GM12878 (cell line): ENCODE measurements at regions of chr22 and their contacts with region 1.

Region 1: GRCh38 chr22:33920927-33921524 is 750 bp upstream of the LARGE1 start:
- DNase-seq: peak; percentile 43
- ATAC-seq: peak; percentile 82
- H3K4me3 ChIP-seq: peak overlapping the region; percentile 93
- H3K27ac ChIP-seq: no peak overlapping the region
- H3K4me1 ChIP-seq: peaks cover 3% of the 10 kb centered on the region; the same call in 1 of the 2 replicates
- H3K27me3 ChIP-seq: peaks cover 0 to 1% of the 10 kb centered on the region in 2 experiments; a peak in 2 of 4 replicates
- CTCF ChIP-seq: no peak
- EP300 ChIP-seq: no peak
- POLR2A ChIP-seq: peak; percentile 92
- RAD21 ChIP-seq: no peak

Region 2: GRCh38 chr22:33519071-33519973 is 401.7 kb before region 1 on chr22:
- CTCF ChIA-PET with region 1: interaction called, 49 read pairs
- POLR2A ChIA-PET with region 1: no interaction called
- RAD21 ChIA-PET with region 1: interaction called, 22 read pairs
- SMC1A ChIA-PET with region 1: interaction called, 24 read pairs
- in situ Hi-C with region 1: loop called (anchors 5 kb)
- intact Hi-C with region 1: loop called (anchors 1 kb)
- DNase-seq: peak; percentile 37
- ATAC-seq: peak; percentile 78
- H3K4me3 ChIP-seq: no peak overlapping the region
- H3K27ac ChIP-seq: peak overlapping the region; percentile 45; the same call in 1 of the 2 replicates
- H3K4me1 ChIP-seq: peaks cover 27% of the 10 kb centered on the region
- H3K27me3 ChIP-seq: no peaks in the 10 kb centered on the region
- CTCF ChIP-seq: peak; percentile 50 to 61 (median 50)
- EP300 ChIP-seq: no peak
- POLR2A ChIP-seq: no peak
- RAD21 ChIP-seq: peak; percentile 86

Region 3: GRCh38 chr22:33579448-33580093 is 341.5 kb before region 1 on chr22:
- CTCF ChIA-PET with region 1: interaction called, 11 read pairs
- POLR2A ChIA-PET with region 1: no interaction called
- RAD21 ChIA-PET with region 1: interaction called, 3 read pairs
- SMC1A ChIA-PET with region 1: interaction called, 4 read pairs
- in situ Hi-C with region 1: loop called (anchors 10 kb)
- intact Hi-C with region 1: loop called (anchors 5 kb)
- DNase-seq: no peak
- ATAC-seq: peak; percentile 97
- H3K4me3 ChIP-seq: no peak overlapping the region
- H3K27ac ChIP-seq: no peak overlapping the region
- H3K4me1 ChIP-seq: peaks cover 3% of the 10 kb centered on the region; the same call in 1 of the 2 replicates
- H3K27me3 ChIP-seq: no peaks in the 10 kb centered on the region
- CTCF ChIP-seq: peak; percentile 86 to 98 (median 95)
- EP300 ChIP-seq: no peak
- POLR2A ChIP-seq: no peak
- RAD21 ChIP-seq: peak; percentile 95

Region 4: GRCh38 chr22:33737662-33738061 is 183.4 kb before region 1 on chr22:
- CTCF ChIA-PET with region 1: no interaction called
- POLR2A ChIA-PET with region 1: no interaction called
- RAD21 ChIA-PET with region 1: no interaction called
- SMC1A ChIA-PET with region 1: no interaction called
- in situ Hi-C with region 1: no loop called
- intact Hi-C with region 1: no loop called
- DNase-seq: no peak
- ATAC-seq: no peak
- H3K4me3 ChIP-seq: no peak overlapping the region
- H3K27ac ChIP-seq: no peak overlapping the region
- H3K4me1 ChIP-seq: no peaks in the 10 kb centered on the region
- H3K27me3 ChIP-seq: no peaks in the 10 kb centered on the region
- CTCF ChIP-seq: no peak
- EP300 ChIP-seq: no peak
- POLR2A ChIP-seq: no peak
- RAD21 ChIP-seq: no peak

Region 5: GRCh38 chr22:33896575-33897447 is 24.2 kb before region 1 on chr22:
- CTCF ChIA-PET with region 1: interaction called, 9 read pairs
- POLR2A ChIA-PET with region 1: interaction called, 4 read pairs
- RAD21 ChIA-PET with region 1: interaction called, 12 read pairs
- SMC1A ChIA-PET with region 1: interaction called, 8 read pairs
- in situ Hi-C with region 1: no loop called
- intact Hi-C with region 1: no loop called
- DNase-seq: no peak
- ATAC-seq: peak; percentile 75
- H3K4me3 ChIP-seq: peak overlapping the region; percentile 51
- H3K27ac ChIP-seq: peak overlapping the region; percentile 95
- H3K4me1 ChIP-seq: peaks cover 38% of the 10 kb centered on the region
- H3K27me3 ChIP-seq: no peaks in the 10 kb centered on the region
- CTCF ChIP-seq: no peak
- EP300 ChIP-seq: no peak
- POLR2A ChIP-seq: peak; percentile 56
- RAD21 ChIP-seq: no peak

Region 6: GRCh38 chr22:34105461-34106062 is 184.5 kb after region 1 on chr22:
- CTCF ChIA-PET with region 1: interaction called, 17 read pairs
- POLR2A ChIA-PET with region 1: no interaction called
- RAD21 ChIA-PET with region 1: interaction called, 5 read pairs
- SMC1A ChIA-PET with region 1: interaction called, 13 read pairs
- in situ Hi-C with region 1: no loop called
- intact Hi-C with region 1: loop called (anchors 2 kb)
- DNase-seq: no peak
- ATAC-seq: no peak
- H3K4me3 ChIP-seq: no peak overlapping the region
- H3K27ac ChIP-seq: no peak overlapping the region
- H3K4me1 ChIP-seq: no peaks in the 10 kb centered on the region
- H3K27me3 ChIP-seq: no peaks in the 10 kb centered on the region
- CTCF ChIP-seq: peak; percentile 38 to 63 (median 52); a peak in 5 of 6 replicates
- EP300 ChIP-seq: no peak
- POLR2A ChIP-seq: no peak
- RAD21 ChIP-seq: peak; percentile 50

Region 7: GRCh38 chr22:35023692-35024363 is 1102.8 kb after region 1 on chr22:
- CTCF ChIA-PET with region 1: interaction called, 8 read pairs
- POLR2A ChIA-PET with region 1: no interaction called
- RAD21 ChIA-PET with region 1: interaction called, 3 read pairs
- SMC1A ChIA-PET with region 1: interaction called, 9 read pairs
- in situ Hi-C with region 1: no loop called
- intact Hi-C with region 1: loop called (anchors 5 kb)
- DNase-seq: no peak
- ATAC-seq: peak; percentile 98
- H3K4me3 ChIP-seq: no peak overlapping the region
- H3K27ac ChIP-seq: no peak overlapping the region
- H3K4me1 ChIP-seq: no peaks in the 10 kb centered on the region
- H3K27me3 ChIP-seq: no peaks in the 10 kb centered on the region
- CTCF ChIP-seq: peak; percentile 88 to 94 (median 92)
- EP300 ChIP-seq: no peak
- POLR2A ChIP-seq: no peak
- RAD21 ChIP-seq: peak; percentile 90

Region 8: GRCh38 chr22:35231585-35232084 is 1310.6 kb after region 1 on chr22:
- CTCF ChIA-PET with region 1: interaction called, 13 read pairs
- POLR2A ChIA-PET with region 1: no interaction called
- RAD21 ChIA-PET with region 1: no interaction called
- SMC1A ChIA-PET with region 1: interaction called, 3 read pairs
- in situ Hi-C with region 1: no loop called
- intact Hi-C with region 1: no loop called
- DNase-seq: peak; percentile 33
- ATAC-seq: peak; percentile 82
- H3K4me3 ChIP-seq: no peak overlapping the region
- H3K27ac ChIP-seq: no peak overlapping the region
- H3K4me1 ChIP-seq: peaks cover 3% of the 10 kb centered on the region
- H3K27me3 ChIP-seq: no peaks in the 10 kb centered on the region
- CTCF ChIP-seq: peak; percentile 92 to 96 (median 95)
- EP300 ChIP-seq: no peak
- POLR2A ChIP-seq: no peak
- RAD21 ChIP-seq: peak; percentile 76